Mammary epithelial cell (primary cell): ENCODE measurements at regions of chr18 and their contacts with region 1.

Region 1: DNA sequence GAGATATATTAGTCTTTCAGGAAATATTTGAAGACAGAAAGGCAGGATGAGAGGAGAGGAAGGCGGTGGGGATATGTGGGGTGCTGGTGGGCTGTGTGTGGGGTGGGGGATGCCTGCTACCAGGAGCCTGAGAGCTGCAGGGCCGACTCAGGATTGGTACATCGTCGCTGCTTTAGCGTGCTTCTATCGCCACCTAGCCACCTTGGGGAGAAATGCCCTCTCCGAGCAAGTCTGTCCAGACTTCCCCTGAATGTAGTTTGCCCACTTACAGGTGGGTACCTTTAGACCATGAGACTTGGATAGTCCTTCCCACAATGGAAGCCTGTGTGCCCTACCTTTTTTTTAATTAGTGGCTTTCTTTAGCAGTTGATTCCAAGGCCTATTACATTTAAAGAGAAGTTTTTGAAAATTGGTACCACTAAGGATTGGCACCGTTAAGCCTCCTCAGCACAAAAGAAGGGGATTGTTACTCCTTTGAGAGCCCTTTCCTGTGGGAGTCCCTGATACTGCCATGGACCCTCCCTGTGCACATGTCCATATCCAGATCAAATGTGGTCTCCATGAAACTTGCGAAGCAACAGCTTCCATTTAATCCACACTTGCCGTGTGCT is 114.1 kb upstream of the NDUFV2 start:
- DNase-seq: peak; percentile 34
- H3K4me3 ChIP-seq: no peak overlapping the region
- H3K27ac ChIP-seq: no peak overlapping the region
- H3K4me1 ChIP-seq: peaks cover 38% of the 10 kb centered on the region
- H3K27me3 ChIP-seq: no peaks in the 10 kb centered on the region
- CTCF ChIP-seq: peak; percentile 93 to 96

Region 2: GRCh38 chr18:8478166-8478967 is 510.0 kb before region 1 on chr18:
- CTCF ChIA-PET with region 1: no interaction called
- dilution Hi-C with region 1: no loop called
- in situ Hi-C with region 1: no loop called
- intact Hi-C with region 1: loop called (anchors 1 kb)
- DNase-seq: peak; percentile 29
- H3K4me3 ChIP-seq: no peak overlapping the region
- H3K27ac ChIP-seq: no peak overlapping the region
- H3K4me1 ChIP-seq: no peaks in the 10 kb centered on the region
- H3K27me3 ChIP-seq: no peaks in the 10 kb centered on the region
- CTCF ChIP-seq: peak; percentile 94 to 95

Region 3: GRCh38 chr18:8696749-8697211 is 291.6 kb before region 1 on chr18:
- CTCF ChIA-PET with region 1: interaction called, 7 read pairs
- dilution Hi-C with region 1: loop called (anchors 25 kb)
- in situ Hi-C with region 1: loop called in 1 of 2 experiments (anchors 10 kb)
- intact Hi-C with region 1: loop called (anchors 1 kb)
- DNase-seq: peak; percentile 48
- H3K4me3 ChIP-seq: no peak overlapping the region
- H3K27ac ChIP-seq: no peak overlapping the region
- H3K4me1 ChIP-seq: peaks cover 4% of the 10 kb centered on the region
- H3K27me3 ChIP-seq: no peaks in the 10 kb centered on the region
- CTCF ChIP-seq: peak; percentile 78 to 87

Region 4: GRCh38 chr18:8835521-8835953 is 152.8 kb before region 1 on chr18:
- CTCF ChIA-PET with region 1: no interaction called
- dilution Hi-C with region 1: no loop called
- in situ Hi-C with region 1: no loop called
- intact Hi-C with region 1: loop called (anchors 10 kb)
- DNase-seq: peak; percentile 68
- H3K4me3 ChIP-seq: no peak overlapping the region
- H3K27ac ChIP-seq: no peak overlapping the region
- H3K4me1 ChIP-seq: peaks cover 14% of the 10 kb centered on the region
- H3K27me3 ChIP-seq: no peaks in the 10 kb centered on the region
- CTCF ChIP-seq: no peak

Region 5: DNA sequence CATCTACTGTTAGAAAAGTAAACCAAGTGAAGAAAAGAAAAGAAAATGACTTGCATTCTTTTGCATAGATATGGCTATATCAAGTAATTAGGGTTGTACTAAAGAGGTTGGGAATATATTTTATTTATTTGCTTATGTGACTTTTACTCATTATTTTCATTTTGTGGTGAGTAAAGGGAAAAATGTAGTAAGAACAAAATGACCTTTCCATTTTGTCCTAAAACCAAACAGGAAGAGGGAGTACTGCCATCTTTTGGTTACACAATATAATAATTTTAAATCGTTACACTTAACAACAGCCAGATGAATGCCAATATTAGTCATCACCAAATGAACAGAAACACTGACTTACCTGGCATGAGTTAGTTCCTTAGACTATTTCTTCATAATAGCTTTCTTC is 66.8 kb after region 1 on chr18:
- CTCF ChIA-PET with region 1: interaction called, 11 read pairs
- dilution Hi-C with region 1: no loop called
- in situ Hi-C with region 1: no loop called
- intact Hi-C with region 1: loop called (anchors 2 kb)
- DNase-seq: peak; percentile 85
- H3K4me3 ChIP-seq: peak overlapping the region in 1 of 3 experiments; percentile 25
- H3K27ac ChIP-seq: peak overlapping the region; percentile 85
- H3K4me1 ChIP-seq: peaks cover 20% of the 10 kb centered on the region
- H3K27me3 ChIP-seq: no peaks in the 10 kb centered on the region
- CTCF ChIP-seq: peak; percentile 29 to 36